GM12878 (cell line): ENCODE measurements at regions of chr5 and their contacts with region 1.

Region 1: DNA sequence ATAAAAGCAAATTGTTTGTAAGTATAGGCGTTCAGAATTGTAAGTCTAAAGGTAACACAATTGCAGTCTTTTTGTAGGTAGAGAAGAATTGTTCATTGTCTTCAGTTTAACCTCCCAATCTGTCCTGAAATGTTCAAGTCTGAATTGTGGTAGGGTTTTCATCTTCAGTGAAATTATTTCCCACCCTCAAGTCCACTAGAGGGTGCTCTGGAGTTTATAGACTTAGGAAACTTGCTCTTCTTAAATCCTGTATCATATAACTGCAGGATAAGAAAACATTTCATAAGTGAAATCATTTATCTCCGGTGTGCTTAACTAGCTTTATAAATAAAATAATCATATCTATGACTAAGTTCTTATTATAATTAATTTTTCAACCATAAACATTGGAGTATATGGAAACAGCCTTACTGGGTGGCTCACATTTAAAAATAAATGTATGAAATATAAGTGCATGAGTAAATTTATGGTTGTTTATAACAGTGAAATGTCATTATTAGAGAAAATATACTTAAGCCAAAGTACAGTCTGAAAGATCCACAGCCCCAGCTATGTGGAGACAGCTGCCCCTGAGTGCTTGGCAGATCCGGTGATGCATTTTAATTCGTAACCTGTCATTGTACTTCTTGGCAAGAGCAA is 182.4 kb upstream of the OTULINL start:
- DNase-seq: no peak
- ATAC-seq: peak; percentile 71
- H3K4me3 ChIP-seq: no peak overlapping the region
- H3K27ac ChIP-seq: no peak overlapping the region
- H3K4me1 ChIP-seq: no peaks in the 10 kb centered on the region
- H3K27me3 ChIP-seq: no peaks in the 10 kb centered on the region
- CTCF ChIP-seq: peak; percentile 50 to 62 (median 56)
- EP300 ChIP-seq: no peak
- POLR2A ChIP-seq: no peak
- RAD21 ChIP-seq: peak; percentile 84

Region 2: DNA sequence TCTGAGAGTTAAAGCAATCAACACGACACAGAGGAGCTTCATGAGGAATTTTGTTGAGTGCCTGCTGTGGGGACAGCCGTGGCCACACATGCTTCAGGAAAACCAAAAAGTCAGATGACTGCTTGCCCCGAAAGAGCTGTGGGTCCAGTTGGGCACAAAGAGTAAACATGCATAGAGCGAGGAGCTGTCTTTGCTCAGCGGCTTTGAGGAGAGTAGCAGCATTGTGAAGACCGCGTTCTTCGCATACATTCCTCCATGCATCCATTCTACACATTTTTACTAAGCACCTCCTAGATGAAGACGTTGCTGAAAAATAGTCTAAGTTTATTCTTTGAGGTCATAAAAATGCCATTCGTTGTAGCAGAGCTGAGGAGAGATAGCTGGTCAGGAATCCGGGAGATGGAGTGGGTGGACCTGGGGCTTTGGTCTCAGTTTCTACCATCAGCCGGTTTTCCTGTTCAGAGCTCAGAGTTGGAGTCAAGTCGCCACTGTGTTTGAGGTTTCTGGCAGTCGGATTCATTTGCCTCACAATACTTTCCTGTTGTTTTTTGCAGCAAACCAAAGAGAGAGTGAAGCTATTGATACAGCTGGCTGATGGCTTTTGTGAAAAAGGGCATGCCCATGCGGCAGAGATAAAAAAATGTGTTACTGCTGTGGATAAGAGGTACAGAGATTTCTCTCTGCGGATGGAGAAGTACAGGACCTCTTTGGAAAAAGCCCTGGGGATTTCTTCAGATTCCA is 12.1 kb before region 1 on chr5:
- CTCF ChIA-PET with region 1: interaction called, 11 read pairs
- POLR2A ChIA-PET with region 1: no interaction called
- RAD21 ChIA-PET with region 1: no interaction called
- SMC1A ChIA-PET with region 1: interaction called, 4 read pairs
- in situ Hi-C with region 1: no loop called
- intact Hi-C with region 1: no loop called
- DNase-seq: no peak
- ATAC-seq: no peak
- H3K4me3 ChIP-seq: no peak overlapping the region
- H3K27ac ChIP-seq: no peak overlapping the region
- H3K4me1 ChIP-seq: no peaks in the 10 kb centered on the region
- H3K27me3 ChIP-seq: no peaks in the 10 kb centered on the region
- CTCF ChIP-seq: no peak
- EP300 ChIP-seq: no peak
- POLR2A ChIP-seq: no peak
- RAD21 ChIP-seq: no peak

Region 3: GRCh38 chr5:14415024-14415697 is 16.0 kb after region 1 on chr5:
- CTCF ChIA-PET with region 1: interaction called, 13 read pairs
- POLR2A ChIA-PET with region 1: no interaction called
- RAD21 ChIA-PET with region 1: no interaction called
- SMC1A ChIA-PET with region 1: interaction called, 15 read pairs
- in situ Hi-C with region 1: no loop called
- intact Hi-C with region 1: no loop called
- DNase-seq: peak; percentile 53
- ATAC-seq: peak; percentile 86
- H3K4me3 ChIP-seq: peak overlapping the region; percentile 32; the same call in 1 of the 2 replicates
- H3K27ac ChIP-seq: peak overlapping the region; percentile 91
- H3K4me1 ChIP-seq: peaks cover 41% of the 10 kb centered on the region
- H3K27me3 ChIP-seq: no peaks in the 10 kb centered on the region
- CTCF ChIP-seq: no peak
- EP300 ChIP-seq: peak; percentile 34 to 64; a peak in 3 of 4 replicates
- POLR2A ChIP-seq: peak; percentile 42; the same call in 1 of the 2 replicates
- RAD21 ChIP-seq: peak; percentile 13; the same call in 1 of the 2 replicates

Region 4: DNA sequence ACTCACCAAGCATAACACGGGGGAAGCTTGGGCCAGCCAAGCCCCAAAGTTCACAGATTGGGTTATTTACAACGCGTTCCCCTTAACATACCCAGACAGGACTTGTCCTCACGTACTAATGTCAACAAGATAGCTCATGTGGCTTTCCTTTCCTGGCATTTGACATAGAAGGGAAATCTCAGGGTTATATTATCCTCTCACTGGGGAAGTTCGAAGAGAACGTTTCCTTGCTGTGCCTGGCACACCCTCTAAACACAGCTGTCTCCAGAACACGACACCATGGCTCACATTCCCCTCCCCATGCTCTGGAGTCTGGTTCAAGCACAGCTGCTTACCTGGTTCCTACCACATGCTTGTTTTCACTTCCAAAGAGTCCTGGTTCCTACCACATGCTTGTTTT is 135.6 kb after region 1 on chr5:
- CTCF ChIA-PET with region 1: no interaction called
- POLR2A ChIA-PET with region 1: no interaction called
- RAD21 ChIA-PET with region 1: no interaction called
- SMC1A ChIA-PET with region 1: no interaction called
- in situ Hi-C with region 1: no loop called
- intact Hi-C with region 1: no loop called
- DNase-seq: no peak
- ATAC-seq: no peak
- H3K4me3 ChIP-seq: no peak overlapping the region
- H3K27ac ChIP-seq: no peak overlapping the region
- H3K4me1 ChIP-seq: no peaks in the 10 kb centered on the region
- H3K27me3 ChIP-seq: no peaks in the 10 kb centered on the region
- CTCF ChIP-seq: no peak
- EP300 ChIP-seq: no peak
- POLR2A ChIP-seq: no peak
- RAD21 ChIP-seq: no peak

Region 5: DNA sequence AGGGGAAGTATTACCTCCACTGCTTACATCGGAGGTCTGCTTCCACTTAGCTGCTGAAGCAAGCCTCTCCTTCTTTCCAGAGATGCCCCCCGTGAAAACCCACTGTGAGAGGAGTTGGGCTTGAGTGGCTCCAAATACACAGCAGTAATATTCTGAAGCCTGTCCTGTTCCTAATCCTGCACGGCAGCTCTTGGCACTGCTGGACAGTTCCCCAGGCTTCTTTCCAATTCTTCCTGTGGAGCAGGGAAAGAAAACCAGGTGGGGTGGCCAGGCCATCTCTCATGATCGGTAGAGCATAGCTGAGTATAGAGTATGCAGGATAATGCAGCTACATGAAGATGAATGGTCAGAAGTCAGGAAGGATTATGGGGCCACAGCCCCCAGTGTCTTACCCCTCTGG is 1445.1 kb after region 1 on chr5:
- CTCF ChIA-PET with region 1: no interaction called
- POLR2A ChIA-PET with region 1: no interaction called
- RAD21 ChIA-PET with region 1: no interaction called
- SMC1A ChIA-PET with region 1: no interaction called
- in situ Hi-C with region 1: no loop called
- intact Hi-C with region 1: no loop called
- DNase-seq: no peak
- ATAC-seq: no peak
- H3K4me3 ChIP-seq: no peak overlapping the region
- H3K27ac ChIP-seq: no peak overlapping the region
- H3K4me1 ChIP-seq: no peaks in the 10 kb centered on the region
- H3K27me3 ChIP-seq: no peaks in the 10 kb centered on the region
- CTCF ChIP-seq: no peak
- EP300 ChIP-seq: no peak
- POLR2A ChIP-seq: no peak
- RAD21 ChIP-seq: no peak